Activated CD8-positive, alpha-beta T cell treated with anti-CD3 and anti-CD28 coated beads, Interleukin-2, amount 10 ng/mL, durations not matched to agents 7 days and 5 days (primary cell): ENCODE measurements at regions of chr14 and their contacts with region 1.

Region 1: GRCh38 chr14:77040059-77040740 is 11.7 kb upstream of the IRF2BPL start:
- DNase-seq: peak; percentile 94
- ATAC-seq: peak; percentile 72
- H3K4me3 Mint-ChIP-seq: peak overlapping the region; percentile 76
- H3K27ac Mint-ChIP-seq: peak overlapping the region; percentile 97
- H3K4me1 Mint-ChIP-seq: peaks cover 89% of the 10 kb centered on the region
- H3K27me3 Mint-ChIP-seq: no peaks in the 10 kb centered on the region

Region 2: GRCh38 chr14:76995279-76996005 is 44.8 kb before region 1 on chr14:
- CTCF ChIA-PET with region 1: no interaction called
- POLR2A ChIA-PET with region 1: no interaction called
- DNase-seq: no peak
- ATAC-seq: no peak
- H3K4me3 Mint-ChIP-seq: no peak overlapping the region
- H3K27ac Mint-ChIP-seq: peak overlapping the region; percentile 53
- H3K4me1 Mint-ChIP-seq: peaks cover 15% of the 10 kb centered on the region
- H3K27me3 Mint-ChIP-seq: no peaks in the 10 kb centered on the region

Region 3: DNA sequence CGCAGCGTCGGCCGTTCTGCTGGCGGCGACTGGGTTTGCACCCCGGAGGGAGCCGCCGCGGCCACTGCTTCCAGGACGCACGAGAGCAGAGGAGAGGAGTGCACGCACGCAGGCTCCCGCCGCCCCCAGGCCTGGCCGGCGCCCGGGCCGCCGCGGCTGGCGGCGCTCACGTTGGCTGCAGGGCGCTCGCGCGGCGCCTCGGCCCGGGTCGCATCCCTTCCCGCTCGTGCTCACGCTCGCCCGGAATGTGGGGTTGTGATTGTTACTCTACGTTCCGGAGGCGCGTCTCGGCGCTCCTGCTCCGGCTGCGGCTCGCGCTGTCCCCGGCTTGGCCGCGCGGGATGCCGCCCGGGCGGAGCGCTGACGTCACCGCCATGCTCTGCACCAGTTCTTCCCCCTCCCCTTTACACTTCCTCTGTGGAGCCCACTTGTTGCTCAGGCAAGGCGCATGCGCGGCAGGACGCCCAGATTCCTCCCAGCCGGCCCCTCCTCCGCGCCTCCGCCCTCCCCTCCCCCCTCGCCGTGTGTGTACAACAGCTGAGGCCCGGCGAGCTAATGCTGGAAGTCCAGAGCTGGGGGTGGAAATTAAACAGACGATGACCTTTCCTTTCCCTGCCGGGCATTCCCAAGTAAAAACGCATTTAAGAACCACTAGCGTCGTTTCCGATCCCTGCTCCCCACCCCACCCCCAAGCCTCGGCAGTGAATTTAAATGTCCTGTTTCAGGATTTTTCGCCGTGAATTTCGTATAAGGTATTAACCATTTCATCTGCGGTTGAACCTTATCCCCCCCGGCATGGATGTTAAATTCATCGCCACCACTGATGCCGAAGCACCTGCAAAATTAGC is 11.6 kb before region 1 on chr14 and contains the start of gene IRF2BPL:
- CTCF ChIA-PET with region 1: interaction called, 19 read pairs
- POLR2A ChIA-PET with region 1: interaction called, 107 read pairs
- DNase-seq: peak; percentile 96
- ATAC-seq: peak; percentile 76
- H3K4me3 Mint-ChIP-seq: peak within 1 kb of the TSS; percentile 94
- H3K27ac Mint-ChIP-seq: peak within 1 kb of the TSS; percentile 88
- H3K4me1 Mint-ChIP-seq: peaks cover 63% of the 10 kb centered on the region
- H3K27me3 Mint-ChIP-seq: no peaks in the 10 kb centered on the region
- total RNA-seq, gene IRF2BPL: 34.5 to 35.6 TPM